ENCODE measurements at regions of chr5 and their contacts with region 1.

Region 1: DNA sequence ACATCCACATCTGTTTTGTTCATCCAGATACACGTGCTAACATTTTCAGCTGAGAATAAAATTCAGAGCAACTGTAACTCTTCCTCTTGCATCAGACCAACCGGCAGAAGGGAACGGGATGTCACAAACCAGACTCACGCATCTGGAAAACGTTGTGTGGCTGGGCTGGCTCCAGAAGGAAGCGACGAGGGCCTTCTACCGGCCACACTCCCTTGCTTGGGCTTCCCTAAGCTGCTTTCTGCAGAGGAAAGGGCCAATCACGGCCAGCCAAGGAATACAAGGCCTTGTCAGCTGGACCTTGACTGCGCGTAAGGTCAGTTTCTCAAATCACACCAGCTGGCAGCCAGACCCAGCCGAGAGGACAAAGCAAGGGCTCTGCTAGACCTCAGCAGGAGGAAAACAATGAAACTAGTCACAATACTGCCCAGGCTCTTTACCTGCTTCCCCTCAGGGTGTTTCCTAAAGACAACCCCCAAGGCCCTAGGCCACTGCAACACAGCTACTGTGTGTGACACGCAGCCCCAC is 106.1 kb downstream of the THBS4 start:
- DNase-seq: peak; percentile 94

Region 2: DNA sequence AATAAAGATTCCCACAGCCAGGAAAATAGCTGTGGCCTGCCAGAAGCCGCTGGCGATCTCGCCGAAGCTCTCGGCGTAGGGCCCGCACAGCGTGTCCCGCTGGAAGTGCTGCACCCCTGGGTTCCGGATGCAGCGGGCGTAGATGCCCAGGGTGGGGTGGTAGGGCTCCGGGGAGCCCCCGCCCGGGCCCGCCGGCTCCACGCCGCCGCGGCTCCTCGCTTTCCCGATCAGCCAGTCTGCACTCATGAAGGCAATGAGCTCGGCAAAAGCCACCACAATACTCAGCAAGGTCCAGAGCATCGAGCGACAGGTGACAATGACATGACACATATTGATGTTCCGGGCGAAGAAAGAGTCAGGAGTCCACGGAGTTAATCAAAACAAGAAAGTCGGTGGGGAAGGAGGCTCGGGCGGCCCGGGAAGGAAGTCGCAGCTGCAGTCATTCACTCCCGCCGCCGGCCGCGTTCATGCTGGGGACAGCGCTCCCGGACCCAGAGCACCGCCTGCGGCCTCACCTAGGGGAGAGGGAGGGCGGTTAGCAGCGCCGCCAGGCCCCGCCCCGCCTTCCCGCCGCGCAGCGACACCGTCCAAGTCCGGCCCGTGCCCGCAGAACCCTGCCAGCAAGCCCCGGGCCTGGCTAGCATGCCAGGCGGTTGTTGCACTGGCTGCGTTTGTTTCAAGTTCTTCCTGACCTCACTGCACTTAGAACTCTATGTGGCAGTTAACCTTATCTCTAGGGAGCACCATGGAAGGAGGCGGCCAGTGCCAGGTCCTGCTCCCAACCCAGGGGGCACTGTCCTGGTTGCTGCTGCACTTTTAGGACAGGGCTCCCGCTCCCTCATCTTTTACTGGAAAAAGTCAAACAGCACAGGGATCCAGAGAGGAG is 1631.1 kb before region 1 on chr5:
- intact Hi-C with region 1: loop called in 1 of 2 experiments (anchors 10 kb)
- DNase-seq: peak; percentile 93

Measured in posterior vena cava (tissue), 2 donors.